Transverse colon (tissue), 4 donors: ENCODE measurements at regions of chr9 and their contacts with region 1.

Region 1: GRCh38 chr9:11726659-11727058 is 966.5 kb upstream of the TYRP1 start:
- DNase-seq: no peak
- H3K4me3 ChIP-seq: no peak overlapping the region
- H3K27ac ChIP-seq: no peak overlapping the region
- H3K4me1 ChIP-seq: no peaks in the 10 kb centered on the region
- H3K27me3 ChIP-seq: no peaks in the 10 kb centered on the region
- CTCF ChIP-seq: no peak
- EP300 ChIP-seq: no peak
- POLR2A ChIP-seq: no peak

Region 2: DNA sequence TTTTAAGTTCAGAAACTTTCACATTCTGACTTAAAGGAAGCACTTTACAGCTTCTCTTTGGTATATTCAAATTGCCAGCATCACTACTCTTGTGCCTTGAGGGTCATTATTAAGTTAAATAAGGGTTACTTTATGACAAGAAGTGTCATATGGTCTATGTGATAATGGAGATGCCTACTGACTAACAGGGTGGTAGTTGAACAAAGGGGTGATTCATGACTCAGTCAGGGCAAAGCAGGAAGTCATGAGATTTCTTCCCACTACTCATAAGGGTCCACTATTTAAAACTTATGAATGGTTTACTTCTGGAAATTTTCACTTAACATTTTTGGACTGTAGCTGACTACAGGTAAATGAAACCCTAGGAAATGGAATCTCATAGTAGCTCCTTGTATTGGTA is 175.6 kb before region 1 on chr9:
- in situ Hi-C with region 1: no loop called
- intact Hi-C with region 1: no loop called
- DNase-seq: no peak
- H3K4me3 ChIP-seq: no peak overlapping the region
- H3K27ac ChIP-seq: no peak overlapping the region
- H3K4me1 ChIP-seq: no peaks in the 10 kb centered on the region
- H3K27me3 ChIP-seq: no peaks in the 10 kb centered on the region
- CTCF ChIP-seq: no peak
- EP300 ChIP-seq: no peak
- POLR2A ChIP-seq: no peak

Region 3: DNA sequence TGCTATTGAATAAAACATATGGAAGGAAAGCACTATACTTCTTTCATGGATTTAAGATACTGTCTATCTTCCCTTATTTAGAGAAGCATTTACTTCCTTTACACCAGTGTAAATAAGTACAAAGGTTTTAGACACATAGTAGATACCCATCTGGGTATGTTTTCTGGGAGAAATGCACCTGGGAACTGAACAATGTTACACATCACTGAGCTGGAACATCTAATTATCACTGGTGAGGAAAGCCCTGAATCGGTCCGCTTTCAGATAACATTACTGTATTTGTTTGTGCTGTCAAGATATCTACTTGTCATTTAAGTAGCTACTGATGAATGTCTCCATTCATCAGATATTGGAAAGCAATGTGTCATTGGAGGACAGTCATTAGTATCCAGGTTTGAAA is 149.1 kb before region 1 on chr9:
- in situ Hi-C with region 1: no loop called
- intact Hi-C with region 1: loop called (anchors 5 kb)
- DNase-seq: no peak
- H3K4me3 ChIP-seq: no peak overlapping the region
- H3K27ac ChIP-seq: no peak overlapping the region
- H3K4me1 ChIP-seq: no peaks in the 10 kb centered on the region
- H3K27me3 ChIP-seq: no peaks in the 10 kb centered on the region
- CTCF ChIP-seq: no peak
- EP300 ChIP-seq: no peak
- POLR2A ChIP-seq: no peak

Region 4: DNA sequence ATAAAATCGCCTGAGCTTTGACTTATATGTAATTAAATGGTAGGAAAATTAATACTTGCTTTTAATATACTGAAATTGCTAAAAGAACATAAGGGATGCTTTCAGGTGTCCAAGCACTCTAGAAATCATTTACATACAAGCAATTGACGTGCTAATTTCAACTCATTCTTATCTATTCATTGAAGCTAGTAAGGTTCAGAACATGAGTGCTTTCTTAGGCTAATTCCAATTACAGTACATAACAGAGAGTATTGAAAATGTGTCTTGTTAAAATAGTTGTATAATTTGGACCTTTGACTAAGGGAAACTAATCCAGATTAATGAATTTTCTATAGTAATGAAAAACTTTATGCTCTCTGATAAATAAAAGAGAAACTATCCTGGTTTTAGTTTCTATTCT is 49.8 kb before region 1 on chr9:
- in situ Hi-C with region 1: no loop called
- intact Hi-C with region 1: loop called (anchors 10 kb)
- DNase-seq: no peak
- H3K4me3 ChIP-seq: no peak overlapping the region
- H3K27ac ChIP-seq: no peak overlapping the region
- H3K4me1 ChIP-seq: no peaks in the 10 kb centered on the region
- H3K27me3 ChIP-seq: no peaks in the 10 kb centered on the region
- CTCF ChIP-seq: no peak
- EP300 ChIP-seq: no peak
- POLR2A ChIP-seq: no peak

Region 5: GRCh38 chr9:11779971-11780370 is 53.3 kb after region 1 on chr9:
- in situ Hi-C with region 1: loop called in 1 of 4 experiments (anchors 10 kb)
- intact Hi-C with region 1: loop called (anchors 5 kb)
- DNase-seq: no peak
- H3K4me3 ChIP-seq: no peak overlapping the region
- H3K27ac ChIP-seq: no peak overlapping the region
- H3K4me1 ChIP-seq: no peaks in the 10 kb centered on the region
- H3K27me3 ChIP-seq: no peaks in the 10 kb centered on the region
- CTCF ChIP-seq: no peak
- EP300 ChIP-seq: no peak
- POLR2A ChIP-seq: no peak